ENCODE measurements at regions of chr17 and their contacts with region 1.

Region 1: GRCh38 chr17:75109407-75110233 is at the start of gene ARMC7:
- DNase-seq: peak; percentile 95
- H3K4me3 ChIP-seq: peak within 1 kb of the TSS; percentile 74 to 93 (median 83)
- H3K27ac ChIP-seq: peak within 1 kb of the TSS; percentile 67 to 81 (median 74)
- H3K4me1 ChIP-seq: peaks cover 27 to 47% (median 36%) of the 10 kb centered on the region in 4 donors
- H3K27me3 ChIP-seq: no peaks in the 10 kb centered on the region
- CTCF ChIP-seq: peak in 1 of 3 experiments; percentile 30
- EP300 ChIP-seq: no peak
- POLR2A ChIP-seq: peak; percentile 66
- total RNA-seq, gene ARMC7: 3.5 to 10.3 (median 6.7) TPM

Region 2: GRCh38 chr17:74972107-74972972 is 137.3 kb before region 1 on chr17 and contains the start of gene HID1:
- intact Hi-C with region 1: loop called (anchors 10 kb)
- DNase-seq: no peak
- H3K4me3 ChIP-seq: peak within 1 kb of the TSS; percentile 69 to 88 (median 74)
- H3K27ac ChIP-seq: peak within 1 kb of the TSS; percentile 43 to 71 (median 57)
- H3K4me1 ChIP-seq: peaks cover 14 to 26% (median 20%) of the 10 kb centered on the region in 4 donors
- H3K27me3 ChIP-seq: peaks cover 0 to 37% (median 0%) of the 10 kb centered on the region in 4 donors
- CTCF ChIP-seq: no peak
- EP300 ChIP-seq: no peak
- POLR2A ChIP-seq: no peak
- total RNA-seq, gene HID1: 4.5 to 17.1 (median 10.9) TPM

Region 3: DNA sequence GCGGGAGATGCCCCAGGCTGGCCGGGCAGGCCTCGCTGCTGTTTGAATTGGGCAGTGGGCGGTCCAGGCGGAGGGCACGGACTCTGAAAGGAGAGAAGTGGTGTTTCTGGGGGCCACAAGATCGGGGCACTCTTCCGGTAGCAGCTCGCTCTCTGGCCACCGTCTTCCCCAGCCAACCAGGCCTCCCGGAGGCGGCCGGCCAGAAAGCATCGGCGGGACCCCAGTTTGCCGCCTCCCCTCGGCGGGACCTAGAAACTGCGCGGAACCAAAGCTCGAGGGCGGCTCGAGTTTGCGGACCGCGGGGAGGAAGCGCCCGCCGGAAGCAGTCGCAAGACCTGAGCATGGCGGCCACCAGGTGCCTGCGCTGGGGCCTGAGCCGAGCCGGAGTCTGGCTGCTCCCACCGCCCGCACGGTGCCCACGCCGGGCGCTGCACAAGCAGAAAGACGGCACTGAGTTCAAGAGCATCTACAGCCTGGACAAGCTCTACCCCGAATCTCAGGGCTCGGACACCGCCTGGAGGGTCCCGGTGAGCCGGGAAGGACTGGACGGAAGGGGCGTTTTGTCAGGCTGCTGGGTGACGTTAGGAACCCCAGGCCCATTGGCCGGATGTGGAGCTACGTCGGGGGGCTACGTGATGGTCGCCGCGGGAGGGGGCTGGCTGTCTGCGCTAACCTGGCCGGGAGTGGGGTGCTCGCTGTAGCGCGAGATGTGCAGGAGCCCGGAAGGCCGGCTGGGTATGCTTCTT is 97.1 kb before region 1 on chr17 and contains the start of gene MRPL58:
- intact Hi-C with region 1: no loop called
- DNase-seq: peak; percentile 96
- H3K4me3 ChIP-seq: peak within 1 kb of the TSS; percentile 66 to 93 (median 78)
- H3K27ac ChIP-seq: peak within 1 kb of the TSS; percentile 90 to 95 (median 92)
- H3K4me1 ChIP-seq: peaks cover 18 to 35% (median 30%) of the 10 kb centered on the region in 4 donors
- H3K27me3 ChIP-seq: no peaks in the 10 kb centered on the region
- CTCF ChIP-seq: peak; percentile 28 to 67 (median 43)
- EP300 ChIP-seq: no peak
- POLR2A ChIP-seq: no peak
- total RNA-seq, gene MRPL58: 34.9 to 47.8 (median 40.2) TPM

Region 4: DNA sequence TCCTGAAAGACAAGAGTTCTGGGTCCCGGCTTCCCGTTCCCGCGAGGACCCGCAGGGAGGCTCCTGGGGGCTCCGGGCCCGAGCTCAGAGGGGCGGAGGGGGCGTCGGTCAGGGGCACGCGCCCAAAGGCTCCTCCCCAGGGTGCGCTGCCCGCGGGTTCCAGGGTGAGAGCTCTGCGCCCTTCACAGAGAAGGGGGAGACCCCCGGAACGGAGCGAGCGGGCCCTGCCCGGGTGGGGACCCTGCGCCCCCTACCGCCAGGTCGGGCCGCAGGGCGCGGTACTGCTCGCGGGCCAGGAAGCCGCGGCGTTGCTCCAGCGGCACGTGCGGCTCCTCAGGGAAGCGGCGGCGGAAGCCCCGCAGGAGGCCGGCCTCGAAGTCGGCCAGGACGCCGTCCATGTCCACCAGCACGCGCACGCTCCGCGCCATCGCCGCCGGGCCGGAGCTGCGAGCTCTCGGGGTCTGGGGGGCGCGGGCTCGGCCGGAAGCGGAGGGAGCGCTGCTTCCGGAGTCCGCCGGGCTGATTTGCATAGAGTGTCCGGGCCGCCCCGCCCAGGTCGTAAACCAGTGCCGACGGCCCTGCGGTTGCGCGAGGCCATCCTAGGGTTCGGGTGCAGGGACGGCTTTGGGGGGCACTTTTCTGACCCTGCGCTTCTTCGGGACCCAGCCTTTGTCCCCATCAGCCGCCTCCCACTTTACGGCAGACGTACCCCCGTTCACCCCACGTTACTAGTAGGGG is 21.8 kb after region 1 on chr17 and contains the start of gene NT5C:
- intact Hi-C with region 1: loop called (anchors 2 kb)
- DNase-seq: no peak
- H3K4me3 ChIP-seq: peak within 1 kb of the TSS; percentile 70 to 89 (median 85)
- H3K27ac ChIP-seq: peak within 1 kb of the TSS; percentile 85 to 94 (median 90)
- H3K4me1 ChIP-seq: peaks cover 10 to 28% (median 21%) of the 10 kb centered on the region in 4 donors
- H3K27me3 ChIP-seq: no peaks in the 10 kb centered on the region
- CTCF ChIP-seq: peak; percentile 63 to 78 (median 73)
- EP300 ChIP-seq: no peak
- POLR2A ChIP-seq: no peak
- total RNA-seq, gene NT5C: 70.6 to 98.7 (median 75.1) TPM

Region 5: GRCh38 chr17:75205037-75205792 is 95.6 kb after region 1 on chr17 and contains the start of gene NUP85:
- intact Hi-C with region 1: loop called (anchors 2 kb)
- DNase-seq: peak; percentile 98
- H3K4me3 ChIP-seq: peak within 1 kb of the TSS; percentile 71 to 91 (median 82)
- H3K27ac ChIP-seq: peak within 1 kb of the TSS; percentile 90 to 95 (median 94)
- H3K4me1 ChIP-seq: peaks cover 19 to 36% (median 28%) of the 10 kb centered on the region in 4 donors
- H3K27me3 ChIP-seq: no peaks in the 10 kb centered on the region
- CTCF ChIP-seq: peak in 1 of 3 experiments; percentile 18
- EP300 ChIP-seq: no peak
- POLR2A ChIP-seq: no peak
- total RNA-seq, gene NUP85: 20.4 to 32.4 (median 23.3) TPM